ENCODE measurements at regions of chr1 and their contacts with region 1.

Region 1: DNA sequence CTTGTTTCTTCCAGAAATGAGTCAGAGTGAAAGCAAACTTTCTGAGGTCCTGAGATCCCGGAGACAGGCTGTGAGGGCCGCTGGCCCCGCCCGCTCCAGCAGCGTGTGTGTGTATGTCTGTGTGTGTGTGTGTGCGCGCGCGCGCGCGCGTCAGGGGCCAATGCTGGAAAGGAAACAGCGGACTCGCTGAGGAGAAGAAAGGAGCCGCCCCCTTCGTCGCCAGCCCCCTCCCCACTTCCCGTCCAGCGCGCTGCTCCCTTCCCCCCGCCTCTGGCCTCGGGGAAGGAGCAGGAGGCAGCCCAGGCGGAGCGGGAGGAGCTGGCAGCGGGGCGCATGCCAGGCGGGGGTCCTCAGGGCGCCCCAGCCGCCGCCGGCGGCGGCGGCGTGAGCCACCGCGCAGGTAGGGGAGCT is at the start of gene DISC1:
- H3K4me3 Mint-ChIP-seq: peak within 1 kb of the TSS; percentile 81
- H3K27ac Mint-ChIP-seq: peak within 1 kb of the TSS; percentile 84
- H3K4me1 Mint-ChIP-seq: peaks cover 57% of the 10 kb centered on the region
- H3K27me3 Mint-ChIP-seq: peaks cover 3% of the 10 kb centered on the region

Region 2: GRCh38 chr1:231612393-231613089 is 14.0 kb before region 1 on chr1:
- intact Hi-C with region 1: loop called (anchors 2 kb)
- H3K4me3 Mint-ChIP-seq: peak overlapping the region; percentile 46
- H3K27ac Mint-ChIP-seq: peak overlapping the region; percentile 76
- H3K4me1 Mint-ChIP-seq: peaks cover 79% of the 10 kb centered on the region
- H3K27me3 Mint-ChIP-seq: no peaks in the 10 kb centered on the region

Region 3: DNA sequence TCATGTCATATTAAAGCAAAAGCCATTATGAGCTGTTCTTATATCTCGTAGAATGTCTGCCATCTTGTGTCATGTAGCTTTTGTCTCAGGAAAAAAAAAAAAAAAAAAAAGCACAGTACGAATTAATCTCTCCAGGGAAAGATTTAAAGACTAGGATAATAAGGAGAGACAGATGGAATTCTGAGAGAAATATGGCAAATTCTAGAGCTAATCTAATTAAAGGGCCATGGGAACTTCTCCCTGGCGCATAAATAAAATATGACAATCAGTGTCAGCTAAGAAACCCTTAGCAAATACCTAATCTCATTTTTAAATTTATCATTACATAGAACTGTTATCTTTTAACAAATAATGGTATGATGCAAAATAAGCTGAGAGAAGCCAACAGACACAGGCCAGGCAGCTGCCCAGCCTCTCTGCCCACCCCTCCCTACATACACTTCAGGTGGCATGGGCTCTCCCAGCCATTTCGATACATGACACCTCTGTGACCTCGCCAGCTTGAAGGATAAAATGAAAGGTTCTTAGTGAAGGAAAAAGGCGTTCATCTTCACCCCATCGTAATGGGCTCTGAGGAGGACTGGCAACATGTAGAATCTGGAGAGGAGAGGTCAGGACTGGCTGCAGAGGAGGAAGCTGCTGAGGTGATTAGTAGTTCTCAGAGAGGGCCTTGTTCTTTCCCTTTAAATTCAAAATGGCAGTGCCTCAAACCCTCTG is 39.8 kb after region 1 on chr1:
- intact Hi-C with region 1: loop called (anchors 5 kb)
- H3K4me3 Mint-ChIP-seq: no peak overlapping the region
- H3K27ac Mint-ChIP-seq: peak overlapping the region; percentile 42
- H3K4me1 Mint-ChIP-seq: peaks cover 59% of the 10 kb centered on the region
- H3K27me3 Mint-ChIP-seq: no peaks in the 10 kb centered on the region

Measured in dendritic cell treated with granulocyte-macrophage colony-stimulating factor and Interleukin-4, amounts not matched to agents 40 ng/mL and 50 ng/mL, for 4 days (primary cell).